H1 (cell line): ENCODE measurements at regions of chr11 and their contacts with region 1.

Region 1: GRCh38 chr11:78030429-78031325 is 7.6 kb upstream of the KCTD14 start:
- DNase-seq: no peak
- H3K4me3 ChIP-seq: no peak overlapping the region
- H3K27ac ChIP-seq: no peak overlapping the region
- H3K4me1 ChIP-seq: peaks cover 0 to 6% (median 0%) of the 10 kb centered on the region in 4 experiments; a peak in 1 of 7 replicates
- H3K27me3 ChIP-seq: no peaks in the 10 kb centered on the region
- CTCF ChIP-seq: no peak
- EP300 ChIP-seq: no peak
- POLR2A ChIP-seq: no peak
- RAD21 ChIP-seq: no peak

Region 2: DNA sequence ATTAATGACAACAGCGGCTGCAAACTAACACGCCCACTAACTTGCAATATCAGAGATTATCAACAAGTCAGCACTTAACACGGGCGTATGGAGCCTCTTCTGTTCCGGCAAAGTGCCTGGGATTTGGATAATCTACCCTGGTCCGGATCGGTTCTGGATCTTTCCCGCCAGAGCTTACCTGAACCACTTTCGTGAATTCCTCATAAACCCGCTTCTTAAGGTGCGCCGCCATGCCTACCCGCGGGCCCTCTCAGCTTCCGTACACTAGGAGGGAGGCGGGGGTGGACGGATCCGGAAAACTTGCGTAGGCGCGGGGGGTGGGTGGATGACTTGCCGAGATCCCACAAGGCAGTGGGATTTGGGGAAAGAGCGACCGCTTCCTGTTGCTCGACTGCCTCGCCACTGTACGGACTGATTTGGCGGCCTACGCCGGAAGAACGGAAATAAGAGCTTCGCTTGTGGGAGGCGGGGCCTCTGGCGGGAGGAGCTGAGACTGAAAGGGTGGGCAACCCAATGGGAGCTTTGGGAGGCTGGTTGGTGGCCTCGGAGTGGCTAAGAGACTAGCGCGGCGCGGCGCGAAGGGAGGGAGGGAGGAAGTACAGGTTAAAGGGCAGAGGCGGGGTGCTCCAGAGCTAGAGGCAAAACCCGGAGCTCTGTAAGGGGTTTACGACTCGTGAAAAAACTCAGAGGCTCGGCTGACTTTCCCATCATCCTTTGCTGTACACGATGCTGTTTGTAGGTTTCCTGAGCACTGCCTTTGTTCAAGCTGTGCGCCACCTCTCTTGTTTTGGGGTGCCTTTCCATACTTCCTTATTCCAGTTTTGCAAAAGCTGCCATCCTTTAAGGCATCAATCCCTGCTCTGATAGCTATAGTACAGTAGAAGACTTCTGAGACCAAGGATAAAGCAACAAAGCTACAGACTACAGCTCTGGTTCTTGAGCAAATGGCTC is 36.0 kb before region 1 on chr11 and contains the start of gene INTS4:
- CTCF ChIA-PET with region 1: interaction called, 11 read pairs
- POLR2A ChIA-PET with region 1: interaction called, 5 read pairs
- DNase-seq: peak; percentile 91 to 99
- H3K4me3 ChIP-seq: peak within 1 kb of the TSS; percentile 81 to 92 (median 84)
- H3K27ac ChIP-seq: peak within 1 kb of the TSS; percentile 60; the same call in 1 of the 2 replicates
- H3K4me1 ChIP-seq: peaks cover 0 to 4% (median 1%) of the 10 kb centered on the region in 4 experiments; a peak in 4 of 7 replicates
- H3K27me3 ChIP-seq: no peaks in the 10 kb centered on the region
- CTCF ChIP-seq: no peak
- EP300 ChIP-seq: 0 out of 3 replicates have a peak, but pooled peaks of 1 of the 2 experiments have one; percentile 21
- POLR2A ChIP-seq: peak; percentile 62 to 78
- RAD21 ChIP-seq: no peak; a peak in 1 of 4 replicates
- total RNA-seq, gene INTS4: 31.3 and 33.4 TPM in 2 replicates

Region 3: GRCh38 chr11:78131956-78132355 is 101.3 kb after region 1 on chr11:
- CTCF ChIA-PET with region 1: no interaction called
- POLR2A ChIA-PET with region 1: no interaction called
- DNase-seq: no peak
- H3K4me3 ChIP-seq: no peak overlapping the region
- H3K27ac ChIP-seq: no peak overlapping the region
- H3K4me1 ChIP-seq: no peaks in the 10 kb centered on the region
- H3K27me3 ChIP-seq: no peaks in the 10 kb centered on the region
- CTCF ChIP-seq: no peak
- EP300 ChIP-seq: no peak
- POLR2A ChIP-seq: no peak
- RAD21 ChIP-seq: no peak